Posterior cingulate gyrus (tissue), 11 donors: ENCODE measurements at regions of chr6 and their contacts with region 1.

Region 1: DNA sequence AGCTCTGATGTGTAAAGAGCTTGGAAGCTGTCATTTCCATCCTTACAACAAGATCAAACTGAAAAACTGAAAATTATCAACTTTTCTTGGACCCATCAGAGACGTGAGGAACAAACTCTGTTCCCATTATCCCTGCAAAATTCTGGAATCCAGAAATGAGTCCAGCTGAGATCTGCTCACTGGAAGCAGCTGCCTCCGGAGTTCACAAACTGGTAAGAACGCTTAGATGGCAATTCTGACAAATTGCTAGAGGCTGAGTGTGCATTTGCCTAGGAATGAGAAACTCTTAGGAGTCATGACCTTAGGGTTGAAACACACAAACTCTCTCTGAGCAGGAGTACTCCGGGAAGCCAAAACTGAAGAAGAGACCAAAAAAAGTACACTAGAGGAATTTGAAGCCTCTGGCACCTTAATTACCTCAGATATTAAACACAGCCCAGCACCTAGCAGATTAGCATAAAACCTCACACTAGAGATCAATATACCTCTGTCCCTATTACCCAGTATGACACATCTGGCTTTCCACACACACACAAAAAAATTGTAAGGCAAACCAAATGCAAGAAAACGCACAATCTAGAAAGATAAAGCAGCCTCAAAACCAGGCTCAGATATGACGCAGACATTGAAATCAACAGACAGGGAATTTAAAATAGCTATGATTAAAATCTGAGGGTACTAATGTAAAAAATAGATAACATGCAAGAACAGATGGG is 233.5 kb upstream of the SGK1 start:
- DNase-seq: no peak

Region 2: DNA sequence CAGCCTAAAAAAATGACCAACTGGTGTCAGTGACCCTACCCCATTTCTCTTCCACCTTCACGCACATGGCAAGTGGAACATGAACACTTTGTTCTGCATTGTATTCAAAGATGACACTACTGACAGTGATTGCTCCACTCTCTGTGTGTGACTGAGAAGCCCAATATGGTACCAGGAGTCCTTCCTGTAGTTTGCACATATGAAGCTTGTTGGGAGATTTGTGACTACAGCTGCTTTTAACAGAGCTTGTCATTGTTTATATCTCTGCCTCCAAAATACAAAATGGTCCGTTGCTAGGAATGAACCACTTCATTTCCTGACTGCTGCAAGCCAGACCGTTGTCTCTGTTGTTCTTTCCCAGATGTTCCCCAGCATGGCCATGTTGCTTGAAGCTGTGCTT is 802.8 kb before region 1 on chr6:
- intact Hi-C with region 1: no loop called
- DNase-seq: no peak

Region 3: GRCh38 chr6:134453870-134454510 is 97.4 kb before region 1 on chr6:
- intact Hi-C with region 1: loop called (anchors 10 kb)
- DNase-seq: no peak

Region 4: DNA sequence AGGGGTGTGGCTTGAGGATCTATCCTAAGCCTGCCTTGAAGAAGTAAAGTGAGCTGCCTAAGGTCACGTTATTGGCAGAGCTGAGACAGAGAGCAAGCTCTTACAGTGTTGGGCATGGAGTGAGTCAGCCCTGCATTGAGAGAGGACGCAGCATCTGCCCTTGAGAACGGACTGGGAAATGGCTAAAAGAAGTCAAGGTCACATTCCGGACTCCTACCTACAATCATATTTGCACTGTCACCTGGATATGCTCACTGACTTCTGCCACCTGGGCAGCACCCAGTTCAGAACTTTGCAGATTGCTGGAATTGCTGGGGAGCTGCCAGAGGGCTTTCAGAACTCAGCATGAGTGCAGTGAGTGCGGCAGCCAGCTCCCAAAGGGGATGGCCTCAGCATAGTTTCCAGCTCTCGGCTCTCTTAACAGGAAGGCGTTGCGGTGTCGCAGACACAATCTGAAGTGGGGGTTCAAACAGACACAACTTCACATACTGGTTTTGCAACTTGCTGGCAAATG is 34.2 kb before region 1 on chr6:
- intact Hi-C with region 1: no loop called
- DNase-seq: peak in 5 of 10 donors; percentile 16 to 84 (median 48)

Region 5: DNA sequence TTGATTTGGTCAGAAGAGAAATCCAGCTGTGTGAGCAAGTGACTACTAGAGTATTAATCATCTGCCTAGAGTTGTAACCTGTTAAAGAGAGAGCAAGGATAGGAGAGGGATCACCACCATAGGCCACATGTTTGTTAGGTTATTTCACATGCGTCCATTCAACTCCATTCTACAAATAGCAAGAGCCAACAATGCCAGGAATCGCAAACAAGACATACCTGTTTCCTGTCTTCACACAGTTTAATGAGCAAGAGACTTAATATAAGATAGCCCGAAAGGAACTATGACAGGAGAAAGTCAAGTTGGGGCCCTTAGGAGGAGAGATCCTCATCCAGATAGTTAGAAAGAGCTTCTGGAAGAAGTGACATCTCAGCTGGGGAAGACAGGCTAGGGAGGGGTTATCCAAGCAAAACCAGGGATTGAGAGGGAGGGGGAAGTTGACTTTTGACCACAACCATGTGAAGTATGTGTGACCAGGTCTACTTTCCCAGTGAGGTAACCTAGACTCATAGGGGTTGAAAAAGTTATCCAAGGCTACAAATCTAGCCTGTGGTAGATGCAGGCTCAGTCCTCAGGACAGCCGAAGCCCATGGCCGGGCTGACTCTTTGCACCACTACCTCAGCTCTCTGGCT is 251.1 kb after region 1 on chr6:
- intact Hi-C with region 1: no loop called
- DNase-seq: no peak

Region 6: DNA sequence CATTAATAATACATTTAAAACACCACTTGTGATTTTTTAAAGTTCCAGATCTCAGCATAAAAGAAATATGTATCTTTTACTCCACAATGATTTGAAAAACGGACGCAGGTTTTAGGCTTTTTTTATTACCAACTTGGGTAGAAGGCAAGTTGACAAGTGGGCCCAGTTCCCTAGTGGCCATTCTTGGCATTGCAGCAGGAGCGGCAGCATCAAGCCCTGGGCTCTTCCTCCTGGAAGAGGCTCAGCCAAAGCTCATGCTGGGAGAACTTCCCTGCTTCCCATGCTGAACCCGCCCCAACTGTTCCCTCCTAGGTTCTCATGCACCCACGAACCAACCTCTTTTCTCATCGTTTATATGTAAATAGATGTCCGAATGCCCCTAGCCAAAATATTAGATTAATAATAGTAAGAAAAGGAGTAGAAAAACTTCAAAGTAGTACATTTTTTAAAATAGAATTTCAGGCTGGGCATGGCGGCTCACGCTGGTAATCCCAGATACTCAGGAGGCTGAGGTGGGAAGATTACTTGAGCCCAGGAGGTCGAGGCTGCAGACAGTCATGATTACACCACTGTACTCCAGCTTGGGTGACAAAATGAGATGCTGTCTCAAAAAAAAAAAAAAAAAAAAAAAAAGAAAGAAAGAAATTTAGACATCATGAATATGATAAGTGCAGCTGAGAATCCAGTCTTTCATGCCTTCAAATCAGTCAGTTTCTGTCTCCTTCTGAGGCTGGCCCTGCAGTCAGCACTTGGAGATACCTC is 611.5 kb after region 1 on chr6:
- intact Hi-C with region 1: no loop called
- DNase-seq: peak in 1 of 10 donors; percentile 50